B cell (primary cell): ENCODE measurements at regions of chr5 and their contacts with region 1.

Region 1: GRCh38 chr5:134738133-134738962 is at the start of gene CAMLG:
- DNase-seq: peak; percentile 98
- ATAC-seq: peak; percentile 97
- H3K4me3 ChIP-seq: peak within 1 kb of the TSS; percentile 69 to 94 (median 89)
- H3K4me3 Mint-ChIP-seq: peak within 1 kb of the TSS; percentile 90
- H3K27ac ChIP-seq: peak within 1 kb of the TSS; percentile 77 to 89
- H3K27ac Mint-ChIP-seq: peak within 1 kb of the TSS; percentile 89
- H3K4me1 ChIP-seq: peaks cover 24 to 42% of the 10 kb centered on the region in 2 donors
- H3K4me1 Mint-ChIP-seq: peaks cover 33% of the 10 kb centered on the region
- H3K27me3 ChIP-seq: no peaks in the 10 kb centered on the region
- H3K27me3 Mint-ChIP-seq: no peaks in the 10 kb centered on the region
- CTCF ChIP-seq: peak; percentile 77
- total RNA-seq, gene CAMLG: 27.5 and 29.7 TPM in 2 replicates

Region 2: DNA sequence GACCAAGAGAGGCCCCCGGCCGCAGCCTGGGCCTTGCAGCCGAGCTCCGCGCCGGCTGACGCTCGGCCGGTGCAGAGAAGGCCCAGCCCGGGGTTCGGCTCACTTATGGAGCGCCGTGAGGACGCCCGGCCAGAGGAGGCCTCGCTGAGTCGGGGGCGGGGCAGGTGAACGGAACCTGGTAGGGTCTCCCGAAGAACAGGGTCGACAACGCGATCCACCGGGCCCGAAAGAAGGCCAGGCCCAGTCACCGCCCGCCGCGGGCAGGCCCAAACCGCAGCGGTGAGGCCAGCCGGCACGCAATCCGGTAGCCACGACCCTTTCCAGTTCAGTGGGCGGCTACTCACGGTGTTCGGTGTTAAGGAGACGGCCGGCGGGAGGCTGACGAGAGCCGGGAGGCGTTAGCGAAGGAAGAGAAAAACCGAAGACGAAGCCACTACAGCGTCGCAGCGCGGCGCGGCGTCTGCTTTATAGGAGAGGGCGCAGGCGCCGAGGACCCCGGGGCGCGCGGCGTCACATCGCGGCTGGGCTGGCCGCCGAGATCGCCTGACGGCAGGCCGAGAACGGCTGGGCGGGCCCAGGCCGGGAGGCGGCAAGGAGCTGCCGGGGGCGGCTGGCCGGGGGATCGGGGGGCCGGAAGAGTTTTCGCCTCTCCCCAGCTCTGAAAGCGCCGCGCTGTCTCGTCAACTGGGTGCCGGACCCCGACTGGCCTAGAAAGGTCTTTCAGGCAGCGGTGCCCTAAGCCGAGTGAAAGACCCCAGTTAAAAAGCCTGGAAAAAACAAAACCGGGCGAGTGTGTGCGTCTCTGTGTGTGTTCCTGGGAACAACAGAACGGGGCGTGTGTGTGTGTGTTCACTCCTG is 561.6 kb before region 1 on chr5 and contains the start of gene SKP1:
- CTCF ChIA-PET with region 1: interaction called, 3 read pairs
- POLR2A ChIA-PET with region 1: interaction called, 4 read pairs
- intact Hi-C with region 1: loop called (anchors 5 kb)
- DNase-seq: peak; percentile 95
- ATAC-seq: peak; percentile 86
- H3K4me3 ChIP-seq: peak within 1 kb of the TSS; percentile 73 to 100 (median 93)
- H3K4me3 Mint-ChIP-seq: peak within 1 kb of the TSS; percentile 96
- H3K27ac ChIP-seq: peak within 1 kb of the TSS; percentile 98 to 100
- H3K27ac Mint-ChIP-seq: peak within 1 kb of the TSS; percentile 98
- H3K4me1 ChIP-seq: peaks cover 25 to 27% of the 10 kb centered on the region in 2 donors
- H3K4me1 Mint-ChIP-seq: peaks cover 29% of the 10 kb centered on the region
- H3K27me3 ChIP-seq: no peaks in the 10 kb centered on the region
- H3K27me3 Mint-ChIP-seq: no peaks in the 10 kb centered on the region
- CTCF ChIP-seq: no peak
- total RNA-seq, gene SKP1: 182 and 186 TPM in 2 replicates

Region 3: GRCh38 chr5:134648425-134649162 is 89.8 kb before region 1 on chr5 and contains the start of gene SEC24A:
- CTCF ChIA-PET with region 1: no interaction called
- POLR2A ChIA-PET with region 1: interaction called, 4 read pairs
- intact Hi-C with region 1: loop called (anchors 1 kb)
- DNase-seq: peak; percentile 94
- ATAC-seq: peak; percentile 83
- H3K4me3 ChIP-seq: peak within 1 kb of the TSS; percentile 80 to 91 (median 88)
- H3K4me3 Mint-ChIP-seq: peak within 1 kb of the TSS; percentile 96
- H3K27ac ChIP-seq: peak within 1 kb of the TSS; percentile 94 to 99
- H3K27ac Mint-ChIP-seq: peak within 1 kb of the TSS; percentile 94
- H3K4me1 ChIP-seq: peaks cover 17 to 18% of the 10 kb centered on the region in 2 donors
- H3K4me1 Mint-ChIP-seq: peaks cover 24% of the 10 kb centered on the region
- H3K27me3 ChIP-seq: no peaks in the 10 kb centered on the region
- H3K27me3 Mint-ChIP-seq: no peaks in the 10 kb centered on the region
- CTCF ChIP-seq: no peak
- total RNA-seq, gene SEC24A: 13.0 and 14.3 TPM in 2 replicates

Region 4: GRCh38 chr5:134845852-134846640 is 107.7 kb after region 1 on chr5 and contains the start of gene C5orf24:
- CTCF ChIA-PET with region 1: interaction called, 6 read pairs
- POLR2A ChIA-PET with region 1: interaction called, 6 read pairs
- intact Hi-C with region 1: loop called (anchors 1 kb)
- DNase-seq: peak; percentile 97
- ATAC-seq: peak; percentile 91
- H3K4me3 ChIP-seq: peak within 1 kb of the TSS; percentile 84 to 93 (median 87)
- H3K4me3 Mint-ChIP-seq: peak within 1 kb of the TSS; percentile 95
- H3K27ac ChIP-seq: peak within 1 kb of the TSS; percentile 86 to 93
- H3K27ac Mint-ChIP-seq: peak within 1 kb of the TSS; percentile 95
- H3K4me1 ChIP-seq: peaks cover 17 to 21% of the 10 kb centered on the region in 2 donors
- H3K4me1 Mint-ChIP-seq: peaks cover 25% of the 10 kb centered on the region
- H3K27me3 ChIP-seq: no peaks in the 10 kb centered on the region
- H3K27me3 Mint-ChIP-seq: no peaks in the 10 kb centered on the region
- CTCF ChIP-seq: no peak
- total RNA-seq, gene C5orf24: 38.2 and 44.2 TPM in 2 replicates

Region 5: DNA sequence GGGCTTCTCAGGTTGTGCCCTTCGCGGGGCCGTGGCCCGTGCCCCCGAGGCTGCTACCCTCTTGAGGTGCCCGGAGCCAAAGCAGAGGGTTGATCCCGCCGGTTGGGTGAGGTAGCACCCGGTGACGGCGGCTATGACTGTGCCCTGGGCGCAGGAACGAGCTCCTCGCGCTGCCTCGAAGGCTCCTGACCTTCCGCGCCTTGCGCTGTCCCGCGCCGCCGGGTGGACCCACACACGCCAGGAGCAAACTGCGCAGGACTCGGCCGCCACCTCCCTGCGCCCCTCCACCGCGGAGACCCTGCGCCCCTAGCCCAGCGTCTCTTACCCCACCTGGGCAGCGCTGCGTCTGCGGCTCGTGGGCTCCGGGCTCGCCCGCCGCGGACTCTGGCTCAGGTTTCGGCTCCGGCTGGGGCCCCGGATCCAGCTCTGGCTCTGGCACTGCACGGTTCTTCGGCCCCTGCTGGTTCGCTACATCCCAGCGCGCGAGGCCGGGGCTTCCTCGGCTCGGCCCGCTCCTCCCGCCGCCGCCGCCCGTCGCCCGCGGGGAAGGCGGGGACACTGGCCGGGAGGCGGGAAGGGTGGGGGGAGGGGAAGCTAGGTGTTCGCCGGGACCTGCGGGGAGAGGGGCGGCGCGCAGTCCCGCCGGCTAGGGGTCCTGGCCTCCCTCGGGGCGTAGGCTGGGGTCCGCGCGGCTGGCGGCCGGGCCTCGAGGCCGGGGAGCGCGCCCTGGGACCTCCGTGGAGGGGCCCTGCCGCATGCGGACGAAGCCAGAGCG is 301.1 kb after region 1 on chr5:
- CTCF ChIA-PET with region 1: no interaction called
- POLR2A ChIA-PET with region 1: no interaction called
- intact Hi-C with region 1: loop called (anchors 10 kb)
- DNase-seq: peak; percentile 74
- ATAC-seq: peak; percentile 39
- H3K4me3 ChIP-seq: peak overlapping the region in 4 of 5 experiments; percentile 12 to 34 (median 24)
- H3K4me3 Mint-ChIP-seq: peak overlapping the region; percentile 68
- H3K27ac ChIP-seq: no peak overlapping the region
- H3K27ac Mint-ChIP-seq: no peak overlapping the region
- H3K4me1 ChIP-seq: peaks cover 35 to 52% of the 10 kb centered on the region in 2 donors
- H3K4me1 Mint-ChIP-seq: peaks cover 35% of the 10 kb centered on the region
- H3K27me3 ChIP-seq: peaks cover 0 to 91% (median 72%) of the 10 kb centered on the region in 4 experiments
- H3K27me3 Mint-ChIP-seq: peaks cover 69% of the 10 kb centered on the region
- CTCF ChIP-seq: no peak

Region 6: DNA sequence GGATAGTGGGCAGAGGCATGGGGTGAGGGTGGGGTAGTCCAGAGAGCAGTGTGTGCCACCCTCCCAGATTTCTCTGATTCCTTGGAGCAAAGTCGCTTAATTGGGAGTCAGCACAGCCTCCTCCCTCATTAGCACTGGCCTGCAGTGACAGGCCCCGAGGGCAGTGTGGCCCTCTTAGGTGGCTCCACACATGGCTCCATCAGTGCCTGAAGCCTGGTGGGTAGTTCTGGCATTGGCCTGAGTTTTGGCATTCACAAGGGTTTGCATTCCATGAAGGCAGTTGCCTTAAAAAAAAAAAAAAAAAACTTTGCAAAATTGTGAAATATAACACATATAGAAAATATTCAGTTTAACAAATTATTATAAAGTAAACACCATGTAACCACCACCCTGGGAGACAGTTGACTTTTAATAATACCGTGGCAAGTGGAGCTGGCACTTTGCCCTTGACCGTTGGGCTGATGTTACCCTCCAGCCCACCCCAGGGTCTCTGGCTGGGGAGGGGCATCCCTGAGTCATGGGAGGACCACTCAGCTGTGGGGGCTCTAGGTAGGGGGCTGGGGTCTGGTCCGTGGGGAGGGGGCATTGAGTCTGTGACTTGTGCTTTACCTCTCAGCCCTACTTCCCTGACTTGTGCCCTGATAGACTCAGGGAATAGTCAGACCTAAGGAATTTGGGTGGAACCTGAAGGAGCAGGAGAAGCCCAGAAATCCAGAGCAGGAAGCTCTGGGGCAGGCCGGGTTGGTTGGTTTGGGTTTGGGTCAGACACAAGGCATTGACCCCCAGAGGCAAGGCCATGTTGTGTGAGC is 347.0 kb after region 1 on chr5:
- CTCF ChIA-PET with region 1: no interaction called
- POLR2A ChIA-PET with region 1: no interaction called
- intact Hi-C with region 1: no loop called
- DNase-seq: no peak
- ATAC-seq: no peak
- H3K4me3 ChIP-seq: no peak overlapping the region
- H3K4me3 Mint-ChIP-seq: no peak overlapping the region
- H3K27ac ChIP-seq: no peak overlapping the region
- H3K27ac Mint-ChIP-seq: no peak overlapping the region
- H3K4me1 ChIP-seq: no peaks in the 10 kb centered on the region
- H3K4me1 Mint-ChIP-seq: no peaks in the 10 kb centered on the region
- H3K27me3 ChIP-seq: peaks cover 0 to 11% (median 1%) of the 10 kb centered on the region in 4 experiments
- H3K27me3 Mint-ChIP-seq: peaks cover 26% of the 10 kb centered on the region
- CTCF ChIP-seq: no peak